CD4-positive, alpha-beta memory T cell (primary cell): ENCODE measurements at regions of chr9 and their contacts with region 1.

Region 1: DNA sequence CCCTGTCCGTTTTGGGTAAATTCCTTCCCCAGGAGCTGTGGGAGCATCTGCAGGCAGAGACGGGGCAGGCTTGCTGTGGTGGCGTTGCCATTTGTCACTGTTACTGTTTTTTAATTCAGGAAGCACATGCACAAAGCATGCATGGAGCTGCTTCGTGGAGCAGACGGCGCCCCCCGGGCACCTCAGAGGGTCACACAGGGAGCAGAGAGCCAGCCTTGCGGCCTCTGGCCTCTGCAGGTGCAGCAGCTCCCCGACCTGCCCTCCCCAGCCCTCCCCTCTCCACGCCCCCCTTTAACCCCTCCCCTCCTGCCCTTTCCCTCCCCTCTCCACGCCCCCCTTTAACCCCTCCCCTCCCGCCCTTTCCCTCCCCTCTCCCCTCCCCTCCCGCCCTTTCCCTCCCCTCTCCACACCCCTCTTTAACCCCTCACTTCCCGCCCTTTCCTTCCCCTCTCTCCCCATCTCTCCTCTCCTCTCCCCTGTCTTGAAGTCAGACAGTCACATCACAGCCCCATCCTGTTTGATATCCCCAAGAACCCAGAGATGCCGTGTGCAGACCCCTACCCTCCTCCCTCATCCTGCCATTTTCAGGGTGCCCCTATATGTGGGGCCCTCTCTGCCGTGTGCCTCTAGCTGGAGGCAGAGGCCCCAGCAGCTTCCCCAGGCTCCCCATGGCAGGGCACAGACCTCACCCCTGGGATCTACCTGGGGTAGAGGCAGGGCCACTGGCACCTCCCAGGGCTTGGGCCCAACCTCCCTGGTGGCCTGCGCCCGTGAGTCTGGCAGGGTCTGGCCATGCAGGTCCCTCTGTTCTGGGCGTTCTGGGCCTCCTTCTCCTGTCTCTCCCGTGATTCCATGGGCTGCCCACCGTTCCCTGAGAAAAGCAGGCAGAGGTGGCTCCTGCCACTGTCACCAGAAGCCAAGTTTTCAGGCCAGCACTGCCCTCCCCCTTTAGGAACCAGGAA is 29.6 kb upstream of the UBAC1 start:
- DNase-seq: peak; percentile 33 to 72 (median 57)
- H3K4me3 ChIP-seq: peak overlapping the region in 1 of 2 donors; percentile 8
- H3K4me3 Mint-ChIP-seq: peak overlapping the region; percentile 36 to 77 (median 65)
- H3K27ac ChIP-seq: no peak overlapping the region
- H3K27ac Mint-ChIP-seq: peak overlapping the region in 2 of 7 donors; percentile 35 to 82
- H3K4me1 ChIP-seq: peaks cover 31% of the 10 kb centered on the region
- H3K4me1 Mint-ChIP-seq: peaks cover 5 to 38% (median 20%) of the 10 kb centered on the region in 4 donors
- H3K27me3 ChIP-seq: no peaks in the 10 kb centered on the region
- H3K27me3 Mint-ChIP-seq: no peaks in the 10 kb centered on the region

Region 2: GRCh38 chr9:135961277-135961705 is 29.5 kb before region 1 on chr9 and contains the start of gene UBAC1:
- CTCF ChIA-PET with region 1: no interaction called
- POLR2A ChIA-PET with region 1: no interaction called
- intact Hi-C with region 1: loop called (anchors 2 kb)
- DNase-seq: peak; percentile 92 to 96 (median 95)
- H3K4me3 ChIP-seq: peak within 1 kb of the TSS; percentile 64 to 69
- H3K4me3 Mint-ChIP-seq: peak within 1 kb of the TSS; percentile 83 to 91 (median 86)
- H3K27ac ChIP-seq: peak within 1 kb of the TSS; percentile 65
- H3K27ac Mint-ChIP-seq: peak within 1 kb of the TSS; percentile 82 to 93 (median 92)
- H3K4me1 ChIP-seq: peaks cover 21% of the 10 kb centered on the region
- H3K4me1 Mint-ChIP-seq: peaks cover 10 to 42% (median 21%) of the 10 kb centered on the region in 4 donors
- H3K27me3 ChIP-seq: no peaks in the 10 kb centered on the region
- H3K27me3 Mint-ChIP-seq: peaks cover 2 to 4% of the 10 kb centered on the region in 2 donors
- total RNA-seq, gene UBAC1: 28.4 to 32.8 TPM

Region 3: DNA sequence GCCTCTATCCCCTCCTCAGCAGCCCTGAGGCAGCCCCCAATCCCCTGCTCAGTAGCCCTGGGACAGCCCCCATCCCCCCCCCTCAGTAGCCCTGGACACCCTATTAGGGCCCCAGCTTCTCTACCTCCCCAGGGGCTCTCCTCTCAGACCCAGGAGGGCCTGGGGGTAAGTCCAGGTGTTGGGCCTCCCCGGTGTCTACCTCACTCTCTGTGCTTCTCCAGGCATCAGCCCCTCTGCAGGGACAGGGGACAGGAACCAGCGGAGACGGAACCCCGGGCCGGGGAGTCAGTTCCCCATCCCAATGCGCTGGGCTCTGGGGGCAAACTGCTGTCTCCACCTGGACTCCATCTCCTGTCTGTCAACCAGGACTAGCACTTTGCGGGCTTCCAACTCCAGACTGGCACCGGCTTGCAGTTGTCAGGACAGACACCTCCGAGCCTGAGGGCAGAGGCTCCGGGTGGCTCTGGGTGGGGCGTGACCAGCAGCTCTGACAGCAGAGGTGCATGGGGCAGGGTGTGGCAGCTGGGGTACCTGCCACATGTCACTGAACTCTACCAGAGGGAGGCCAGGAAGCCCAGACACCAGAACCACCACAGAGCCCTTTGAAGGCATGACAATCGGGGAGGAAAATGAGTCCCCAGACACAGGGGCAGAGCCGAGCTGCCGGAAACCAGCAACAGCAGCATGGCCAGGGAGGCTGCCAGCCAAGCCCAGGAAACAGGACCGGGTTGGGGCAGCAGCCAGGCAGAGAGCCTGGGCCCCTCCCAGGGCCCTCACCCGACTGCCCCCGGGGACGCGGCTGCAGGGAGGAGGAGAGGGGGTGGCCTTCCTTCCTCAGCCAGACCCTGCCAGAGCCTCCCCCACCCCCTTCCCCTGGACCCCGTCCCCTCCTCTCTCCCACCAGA is 11.9 kb before region 1 on chr9:
- CTCF ChIA-PET with region 1: no interaction called
- POLR2A ChIA-PET with region 1: interaction called, 4 read pairs
- intact Hi-C with region 1: loop called (anchors 1 kb)
- DNase-seq: peak; percentile 73 to 82 (median 80)
- H3K4me3 ChIP-seq: peak overlapping the region in 1 of 2 donors; percentile 6
- H3K4me3 Mint-ChIP-seq: peak overlapping the region; percentile 32 to 79 (median 67)
- H3K27ac ChIP-seq: no peak overlapping the region
- H3K27ac Mint-ChIP-seq: peak overlapping the region; percentile 30 to 90 (median 77)
- H3K4me1 ChIP-seq: peaks cover 19% of the 10 kb centered on the region
- H3K4me1 Mint-ChIP-seq: peaks cover 5 to 15% (median 9%) of the 10 kb centered on the region in 4 donors
- H3K27me3 ChIP-seq: no peaks in the 10 kb centered on the region
- H3K27me3 Mint-ChIP-seq: no peaks in the 10 kb centered on the region